Common myeloid progenitor, CD34-positive (primary cell): ENCODE measurements at regions of chr11 and their contacts with region 1.

Region 1: GRCh38 chr11:32438866-32439489 is 3.6 kb upstream of the WT1 start:
- DNase-seq: peak in 1 of 3 donors; percentile 50
- H3K4me3 ChIP-seq: peak overlapping the region in 4 of 7 experiments; percentile 37 to 48 (median 42)
- H3K27ac ChIP-seq: no peak overlapping the region
- H3K4me1 ChIP-seq: peaks cover 5 to 76% (median 55%) of the 10 kb centered on the region in 4 experiments
- H3K27me3 ChIP-seq: peaks cover 19 to 97% (median 54%) of the 10 kb centered on the region in 5 experiments

Region 2: GRCh38 chr11:32358729-32359128 is 80.2 kb before region 1 on chr11:
- CTCF ChIA-PET with region 1: no interaction called
- POLR2A ChIA-PET with region 1: no interaction called
- DNase-seq: no peak
- H3K4me3 ChIP-seq: no peak overlapping the region
- H3K27ac ChIP-seq: no peak overlapping the region
- H3K4me1 ChIP-seq: no peaks in the 10 kb centered on the region
- H3K27me3 ChIP-seq: peaks cover 0 to 5% (median 2%) of the 10 kb centered on the region in 5 experiments

Region 3: DNA sequence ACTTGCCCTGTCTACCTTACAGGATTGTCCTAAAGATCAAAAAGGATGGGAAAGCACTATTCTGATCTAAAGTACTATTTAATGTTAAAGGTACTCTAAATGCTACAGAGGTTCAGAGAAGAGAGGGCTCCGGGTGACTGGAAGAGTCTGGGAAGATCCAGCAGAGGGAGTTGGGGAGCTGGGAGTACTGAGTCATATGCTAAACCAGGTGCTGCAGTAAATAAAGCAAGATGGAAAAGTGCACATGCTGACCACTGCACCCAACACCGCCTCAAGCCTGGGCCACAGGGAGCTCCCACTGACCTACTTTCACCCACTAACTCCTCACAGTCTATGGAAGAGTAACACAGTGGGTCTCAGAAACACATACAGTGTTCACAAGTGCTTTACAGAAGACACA is 53.0 kb before region 1 on chr11:
- CTCF ChIA-PET with region 1: interaction called, 11 read pairs
- POLR2A ChIA-PET with region 1: no interaction called
- DNase-seq: peak; percentile 28 to 39 (median 35)
- H3K4me3 ChIP-seq: peak overlapping the region in 2 of 7 experiments; percentile 42 to 44
- H3K27ac ChIP-seq: peak overlapping the region in 1 of 2 experiments; percentile 62
- H3K4me1 ChIP-seq: peaks cover 16 to 28% (median 19%) of the 10 kb centered on the region in 4 experiments
- H3K27me3 ChIP-seq: no peaks in the 10 kb centered on the region

Region 4: DNA sequence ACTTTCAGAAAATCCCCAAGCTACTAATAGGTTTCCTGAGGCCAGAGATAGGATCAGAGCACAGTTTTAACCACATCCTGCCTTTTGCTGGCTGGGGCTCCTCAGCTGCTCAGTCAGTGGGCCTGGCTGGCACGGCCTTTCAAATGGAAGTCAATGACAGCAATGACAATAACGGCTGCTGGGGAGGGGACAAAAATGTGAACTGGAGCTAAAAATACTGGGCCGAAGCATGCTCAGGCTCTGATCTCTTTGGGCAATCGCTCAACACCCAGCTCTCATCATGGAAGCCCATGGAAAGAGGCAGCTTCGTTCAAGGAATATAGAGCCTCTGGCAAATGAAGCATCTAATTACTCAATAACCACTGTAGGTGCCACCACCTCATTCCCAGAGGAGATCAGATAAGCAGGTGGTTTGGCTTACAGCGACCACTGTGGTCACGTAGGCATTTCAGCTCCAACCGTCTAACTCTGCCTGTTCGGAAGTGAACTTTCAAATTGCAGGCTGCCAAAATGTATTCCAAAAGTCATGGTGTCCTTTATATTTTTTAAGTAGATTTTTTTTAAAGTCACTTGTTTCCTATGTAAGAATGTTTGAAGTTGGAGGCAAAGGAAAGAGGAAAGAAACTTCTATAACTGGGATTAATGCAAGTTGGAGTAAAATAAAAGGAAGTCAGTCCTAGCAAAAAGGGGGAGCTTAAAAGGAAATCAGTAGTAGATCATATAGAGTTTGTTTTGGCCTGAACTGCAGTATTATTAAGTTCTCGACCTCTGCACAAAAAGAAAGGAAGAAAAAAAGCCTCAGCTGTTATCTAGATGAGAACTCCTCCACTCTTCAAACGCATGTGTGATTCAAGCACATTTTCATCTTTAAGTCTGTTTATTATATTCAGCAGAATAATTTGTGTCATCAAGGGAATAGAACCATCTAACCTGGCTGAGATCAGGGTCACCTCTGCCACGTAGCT is 17.8 kb before region 1 on chr11:
- CTCF ChIA-PET with region 1: interaction called, 14 read pairs
- POLR2A ChIA-PET with region 1: interaction called, 3 read pairs
- DNase-seq: peak; percentile 92 to 97 (median 96)
- H3K4me3 ChIP-seq: peak overlapping the region in 5 of 7 experiments; percentile 4 to 59 (median 54)
- H3K27ac ChIP-seq: peak overlapping the region; percentile 79 to 92
- H3K4me1 ChIP-seq: peaks cover 27 to 90% (median 75%) of the 10 kb centered on the region in 4 experiments
- H3K27me3 ChIP-seq: peaks cover 0 to 3% (median 0%) of the 10 kb centered on the region in 5 experiments

Region 5: DNA sequence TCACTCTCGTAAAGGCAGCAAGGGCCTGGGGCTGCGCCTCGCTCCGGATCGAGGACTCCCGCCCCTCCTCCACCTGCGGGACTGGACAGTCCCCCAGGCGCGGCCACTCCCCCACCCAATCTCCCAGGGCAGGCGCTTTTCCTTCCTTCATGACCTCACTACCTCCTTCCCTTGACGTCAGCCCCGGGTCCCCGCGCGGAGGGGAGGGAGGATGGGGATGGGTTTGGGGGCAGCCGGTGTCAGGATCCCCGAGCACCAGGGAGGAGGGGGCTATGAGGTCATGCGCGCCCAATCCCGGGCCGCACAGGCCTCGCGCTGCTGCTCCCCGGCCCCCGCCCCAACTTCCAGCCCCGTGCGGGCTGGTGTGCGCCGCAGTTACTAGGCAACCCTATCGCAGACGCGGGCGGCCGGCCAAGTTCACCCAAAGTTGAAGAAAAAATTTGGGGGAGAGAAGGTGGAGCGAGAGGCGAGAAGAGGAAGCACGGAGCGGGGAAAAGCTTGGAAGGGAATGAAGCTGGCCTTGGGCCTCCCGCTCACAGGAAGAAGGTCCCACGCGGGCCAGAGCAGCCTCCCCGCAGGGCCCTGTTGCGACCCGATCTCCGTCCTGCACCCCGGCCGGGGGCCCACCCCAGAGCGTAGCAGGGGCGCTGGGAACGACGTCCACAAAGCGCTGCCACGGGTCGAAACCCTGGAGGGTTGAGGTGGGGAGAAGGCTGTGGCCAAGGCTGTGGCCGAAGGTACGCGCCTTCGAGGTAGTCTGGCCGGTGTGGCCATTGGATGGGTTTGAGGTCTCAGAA is 12.0 kb before region 1 on chr11:
- CTCF ChIA-PET with region 1: interaction called, 18 read pairs
- POLR2A ChIA-PET with region 1: no interaction called
- DNase-seq: peak; percentile 96 to 98 (median 97)
- H3K4me3 ChIP-seq: peak overlapping the region in 5 of 7 experiments; percentile 19 to 65 (median 56)
- H3K27ac ChIP-seq: no peak overlapping the region
- H3K4me1 ChIP-seq: peaks cover 16 to 77% (median 53%) of the 10 kb centered on the region in 4 experiments
- H3K27me3 ChIP-seq: peaks cover 0 to 61% (median 28%) of the 10 kb centered on the region in 5 experiments

Region 6: GRCh38 chr11:32510039-32510438 is 71.1 kb after region 1 on chr11:
- CTCF ChIA-PET with region 1: no interaction called
- POLR2A ChIA-PET with region 1: no interaction called
- DNase-seq: no peak
- H3K4me3 ChIP-seq: no peak overlapping the region
- H3K27ac ChIP-seq: no peak overlapping the region
- H3K4me1 ChIP-seq: no peaks in the 10 kb centered on the region
- H3K27me3 ChIP-seq: no peaks in the 10 kb centered on the region